Astrocyte of the cerebellum (primary cell): ENCODE measurements at regions of chr5 and their contacts with region 1.

Region 1: GRCh38 chr5:150389531-150390266 is 23.0 kb downstream of the CD74 start:
- DNase-seq: no peak
- H3K4me3 ChIP-seq: no peak overlapping the region
- CTCF ChIP-seq: no peak

Region 2: GRCh38 chr5:150295172-150295634 is 94.5 kb before region 1 on chr5:
- in situ Hi-C with region 1: no loop called
- DNase-seq: no peak
- H3K4me3 ChIP-seq: no peak overlapping the region
- CTCF ChIP-seq: no peak

Region 3: DNA sequence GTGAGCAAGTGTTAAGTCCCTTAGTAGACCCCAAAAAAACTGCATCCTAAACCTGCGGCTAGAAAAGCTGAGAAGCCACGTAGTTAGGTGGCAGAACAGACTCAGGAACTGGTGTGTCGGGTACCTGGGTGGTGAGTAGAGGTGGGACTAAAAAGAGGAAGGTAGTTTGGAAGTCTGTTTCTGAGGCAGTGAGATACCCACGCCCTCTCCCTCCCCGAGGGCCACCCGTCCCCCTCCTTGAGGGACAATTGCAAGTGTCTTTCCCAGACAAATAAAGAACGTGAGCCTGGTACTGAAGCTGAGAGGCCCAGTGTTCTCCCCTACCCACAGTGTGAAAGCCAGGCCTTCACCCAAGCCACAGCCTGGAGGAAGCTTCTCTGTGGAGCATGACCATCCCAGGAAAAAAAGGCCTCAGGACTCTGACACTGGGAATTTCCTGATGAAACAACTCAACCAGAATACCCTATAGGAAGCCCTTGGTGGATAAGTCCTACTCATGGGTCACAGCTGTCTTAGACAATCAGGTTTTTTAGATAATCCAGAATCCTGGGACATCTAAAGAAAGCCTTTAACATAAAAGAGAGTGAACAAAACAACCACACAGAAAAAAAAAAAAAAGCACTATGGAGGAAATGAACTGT is 30.1 kb after region 1 on chr5:
- in situ Hi-C with region 1: loop called (anchors 5 kb)
- DNase-seq: no peak
- H3K4me3 ChIP-seq: no peak overlapping the region
- CTCF ChIP-seq: no peak

Region 4: DNA sequence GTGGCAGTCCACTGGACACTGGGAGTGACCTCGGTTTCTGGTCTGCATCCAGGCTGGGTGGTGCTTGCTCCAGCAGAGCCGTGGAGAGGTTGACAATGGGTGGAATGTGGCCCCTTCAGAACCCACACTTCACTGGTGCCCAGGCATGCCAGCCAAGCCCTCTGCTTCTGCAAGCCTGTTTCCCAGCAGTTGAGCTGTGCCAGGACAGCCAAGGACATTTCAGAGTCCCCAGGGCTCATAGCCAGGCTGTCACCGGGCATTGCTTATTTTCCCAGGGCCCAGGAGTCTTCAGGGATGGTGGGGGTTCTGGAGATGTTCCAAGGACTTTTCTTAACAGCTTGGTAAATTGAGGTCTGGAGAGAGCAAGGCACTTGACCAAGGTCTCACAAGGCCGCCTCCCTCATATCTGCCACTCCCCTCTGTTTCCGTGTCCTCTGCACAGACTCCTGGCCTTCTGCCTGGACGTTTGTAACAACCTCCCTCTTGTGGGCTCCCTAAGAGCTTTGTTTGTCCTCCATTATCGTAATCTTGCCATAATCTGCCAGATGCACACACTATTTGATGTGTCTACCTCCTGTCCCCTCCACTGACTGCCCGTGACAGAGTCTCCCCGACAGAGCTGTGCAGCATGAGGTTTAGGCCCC is 114.4 kb after region 1 on chr5:
- in situ Hi-C with region 1: no loop called
- DNase-seq: no peak
- H3K4me3 ChIP-seq: no peak overlapping the region
- CTCF ChIP-seq: no peak